ENCODE measurements at regions of chr6 and their contacts with region 1.

Region 1: GRCh38 chr6:148144917-148145521 is 197.6 kb upstream of the SASH1 start:
- DNase-seq: peak; percentile 14
- H3K4me3 Mint-ChIP-seq: no peak overlapping the region
- H3K27ac Mint-ChIP-seq: no peak overlapping the region
- H3K4me1 Mint-ChIP-seq: peaks cover 10% of the 10 kb centered on the region
- H3K27me3 Mint-ChIP-seq: peaks cover 3% of the 10 kb centered on the region

Region 2: GRCh38 chr6:147382945-147383554 is 762.0 kb before region 1 on chr6:
- intact Hi-C with region 1: loop called (anchors 10 kb)
- DNase-seq: no peak
- H3K4me3 Mint-ChIP-seq: no peak overlapping the region
- H3K27ac Mint-ChIP-seq: no peak overlapping the region
- H3K4me1 Mint-ChIP-seq: peaks cover 13% of the 10 kb centered on the region
- H3K27me3 Mint-ChIP-seq: no peaks in the 10 kb centered on the region

Region 3: GRCh38 chr6:147506704-147507114 is 638.3 kb before region 1 on chr6:
- intact Hi-C with region 1: loop called (anchors 1 kb)
- DNase-seq: no peak
- H3K4me3 Mint-ChIP-seq: peak overlapping the region; percentile 62
- H3K27ac Mint-ChIP-seq: no peak overlapping the region
- H3K4me1 Mint-ChIP-seq: peaks cover 12% of the 10 kb centered on the region
- H3K27me3 Mint-ChIP-seq: peaks cover 51% of the 10 kb centered on the region

Region 4: DNA sequence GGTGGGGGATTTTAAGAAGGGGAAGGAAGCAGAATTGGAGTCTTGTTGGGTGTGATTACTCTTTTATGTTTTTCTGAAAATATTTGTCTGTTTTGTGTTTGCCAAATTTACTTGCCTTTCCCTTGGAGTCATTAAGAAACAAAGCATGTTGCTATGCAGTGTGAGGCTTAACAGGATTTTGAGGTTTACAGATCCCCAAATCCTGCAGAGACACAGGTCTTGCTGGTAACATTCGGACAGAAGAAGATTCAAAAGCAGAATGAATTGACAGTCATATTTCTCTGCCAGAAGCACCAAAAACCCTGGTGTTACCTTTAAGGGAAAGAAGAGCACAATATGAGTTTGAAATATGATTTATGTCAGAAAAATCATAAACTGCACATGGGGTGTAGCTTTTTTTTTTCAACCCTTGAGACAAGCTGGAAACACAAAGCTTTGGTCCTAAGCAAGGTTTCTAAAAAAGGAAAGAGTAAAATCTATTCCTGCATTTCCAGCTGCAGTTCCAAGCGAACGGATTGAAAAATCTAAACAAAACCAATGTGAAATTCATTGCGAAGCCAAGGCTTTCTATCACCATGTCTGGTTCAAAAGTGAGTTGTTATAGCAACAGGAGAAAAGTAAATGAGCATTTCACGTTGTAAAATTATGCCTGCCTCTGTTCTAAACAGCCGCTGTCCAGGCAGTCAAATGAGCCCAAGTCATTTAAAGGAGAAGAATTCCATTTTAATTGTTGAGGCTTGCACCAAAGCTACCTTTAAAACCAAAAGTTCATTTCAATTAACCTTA is 161.2 kb before region 1 on chr6:
- intact Hi-C with region 1: no loop called
- DNase-seq: no peak
- H3K4me3 Mint-ChIP-seq: no peak overlapping the region
- H3K27ac Mint-ChIP-seq: no peak overlapping the region
- H3K4me1 Mint-ChIP-seq: no peaks in the 10 kb centered on the region
- H3K27me3 Mint-ChIP-seq: no peaks in the 10 kb centered on the region

Region 5: GRCh38 chr6:148166339-148166968 is 21.4 kb after region 1 on chr6:
- intact Hi-C with region 1: loop called (anchors 1 kb)
- DNase-seq: no peak
- H3K4me3 Mint-ChIP-seq: no peak overlapping the region
- H3K27ac Mint-ChIP-seq: no peak overlapping the region
- H3K4me1 Mint-ChIP-seq: no peaks in the 10 kb centered on the region
- H3K27me3 Mint-ChIP-seq: no peaks in the 10 kb centered on the region

Region 6: GRCh38 chr6:148464319-148465010 is 319.4 kb after region 1 on chr6:
- intact Hi-C with region 1: loop called (anchors 10 kb)
- DNase-seq: peak; percentile 28
- H3K4me3 Mint-ChIP-seq: no peak overlapping the region
- H3K27ac Mint-ChIP-seq: no peak overlapping the region
- H3K4me1 Mint-ChIP-seq: peaks cover 3% of the 10 kb centered on the region
- H3K27me3 Mint-ChIP-seq: peaks cover 24% of the 10 kb centered on the region

Measured in activated T-helper 2 cell treated with anti-CD3 and anti-CD28 coated beads, Interferon-gamma antibody, Interleukin-2, Interleukin-4, amounts not matched to agents 10 μg/mL and 5 μg/mL and 100 μg/mL, durations not matched to agents 14 hours and 24 hours and 36 hours (primary cell).